CD8-positive, alpha-beta T cell (primary cell): ENCODE measurements at regions of chr1 and their contacts with region 1.

Region 1: DNA sequence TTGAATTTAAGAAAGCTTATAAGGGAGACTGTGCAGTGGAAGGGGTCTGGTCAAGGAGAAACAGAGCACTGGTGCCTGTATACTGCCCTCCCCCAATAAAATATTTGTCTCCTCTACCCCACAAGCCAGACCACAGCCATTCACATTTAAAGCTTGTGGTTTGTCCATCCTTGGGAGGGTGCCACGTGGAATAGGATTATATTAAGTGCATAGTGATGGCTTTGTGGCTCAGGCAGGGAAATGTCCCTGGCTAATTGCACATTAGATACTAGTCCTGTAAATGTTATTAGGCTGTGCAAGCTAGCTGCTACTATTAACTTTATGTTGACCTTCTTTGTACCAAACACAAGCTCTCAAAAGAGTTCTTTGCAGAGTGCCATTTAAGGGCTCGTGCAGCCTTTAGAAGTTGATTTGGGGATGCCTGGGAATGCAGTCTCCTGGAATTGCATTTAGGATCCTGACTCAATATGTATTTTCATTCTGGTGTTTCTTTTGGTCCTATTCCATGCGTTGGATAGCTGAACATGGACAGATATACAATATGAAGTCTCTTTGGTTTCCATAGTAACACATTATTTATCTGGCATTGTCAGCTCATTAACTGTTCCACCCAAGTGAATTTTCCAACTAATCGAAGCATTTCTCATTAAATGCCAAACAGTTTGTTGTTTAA is 210.6 kb downstream of the ROR1 start:
- DNase-seq: no peak
- ATAC-seq: no peak
- H3K4me3 ChIP-seq: no peak overlapping the region
- H3K4me3 Mint-ChIP-seq: no peak overlapping the region
- H3K27ac ChIP-seq: no peak overlapping the region
- H3K27ac Mint-ChIP-seq: no peak overlapping the region
- H3K4me1 ChIP-seq: no peaks in the 10 kb centered on the region
- H3K4me1 Mint-ChIP-seq: no peaks in the 10 kb centered on the region
- H3K27me3 ChIP-seq: peaks cover 0 to 4% of the 10 kb centered on the region in 2 experiments
- H3K27me3 Mint-ChIP-seq: no peaks in the 10 kb centered on the region
- CTCF ChIP-seq: no peak

Region 2: GRCh38 chr1:63466759-63467158 is 517.6 kb before region 1 on chr1:
- CTCF ChIA-PET with region 1: no interaction called
- POLR2A ChIA-PET with region 1: no interaction called
- intact Hi-C with region 1: loop called in 1 of 2 experiments (anchors 10 kb)
- DNase-seq: no peak
- ATAC-seq: no peak
- H3K4me3 ChIP-seq: no peak overlapping the region
- H3K4me3 Mint-ChIP-seq: no peak overlapping the region
- H3K27ac ChIP-seq: no peak overlapping the region
- H3K27ac Mint-ChIP-seq: no peak overlapping the region
- H3K4me1 ChIP-seq: no peaks in the 10 kb centered on the region
- H3K4me1 Mint-ChIP-seq: no peaks in the 10 kb centered on the region
- H3K27me3 ChIP-seq: no peaks in the 10 kb centered on the region
- H3K27me3 Mint-ChIP-seq: no peaks in the 10 kb centered on the region
- CTCF ChIP-seq: no peak